Gastrocnemius medialis (tissue), 4 donors: ENCODE measurements at regions of chr3 and their contacts with region 1.

Region 1: DNA sequence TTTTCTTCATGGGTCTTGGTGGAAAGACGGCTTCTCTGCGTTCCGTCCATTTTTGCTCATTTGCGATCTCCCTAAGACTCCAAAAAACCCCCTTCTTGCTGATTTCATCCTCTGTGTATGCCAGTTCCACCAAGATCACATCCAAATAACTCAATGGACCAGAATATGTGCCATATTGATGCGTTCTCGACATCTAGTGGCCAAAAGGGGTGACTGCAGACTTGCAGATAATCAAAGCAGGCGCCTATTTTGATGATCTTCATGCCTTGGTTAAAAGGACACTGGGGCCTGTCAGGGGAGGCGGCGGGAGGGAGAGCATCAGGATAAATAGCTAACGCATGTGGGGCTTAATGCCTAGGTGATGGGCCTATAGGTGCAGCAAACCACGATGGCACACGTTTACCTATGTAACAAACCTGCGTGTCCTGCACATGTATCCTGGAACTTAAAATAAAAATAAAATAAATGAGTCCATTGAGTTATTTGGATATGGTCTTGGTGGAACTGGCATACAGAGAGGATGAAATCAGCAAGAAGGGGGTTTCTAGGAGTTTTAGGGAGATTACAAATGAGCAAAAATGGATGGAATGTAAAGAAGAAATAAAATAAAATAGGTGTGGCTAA is 104.2 kb upstream of the RAD18 start:
- DNase-seq: peak in 1 of 2 donors; percentile 36
- ATAC-seq: peak; percentile 66 to 74
- H3K4me3 ChIP-seq: no peak overlapping the region
- H3K27ac ChIP-seq: no peak overlapping the region
- H3K4me1 ChIP-seq: no peaks in the 10 kb centered on the region
- H3K27me3 ChIP-seq: no peaks in the 10 kb centered on the region
- CTCF ChIP-seq: peak; percentile 77 to 94 (median 84)
- POLR2A ChIP-seq: no peak

Region 2: DNA sequence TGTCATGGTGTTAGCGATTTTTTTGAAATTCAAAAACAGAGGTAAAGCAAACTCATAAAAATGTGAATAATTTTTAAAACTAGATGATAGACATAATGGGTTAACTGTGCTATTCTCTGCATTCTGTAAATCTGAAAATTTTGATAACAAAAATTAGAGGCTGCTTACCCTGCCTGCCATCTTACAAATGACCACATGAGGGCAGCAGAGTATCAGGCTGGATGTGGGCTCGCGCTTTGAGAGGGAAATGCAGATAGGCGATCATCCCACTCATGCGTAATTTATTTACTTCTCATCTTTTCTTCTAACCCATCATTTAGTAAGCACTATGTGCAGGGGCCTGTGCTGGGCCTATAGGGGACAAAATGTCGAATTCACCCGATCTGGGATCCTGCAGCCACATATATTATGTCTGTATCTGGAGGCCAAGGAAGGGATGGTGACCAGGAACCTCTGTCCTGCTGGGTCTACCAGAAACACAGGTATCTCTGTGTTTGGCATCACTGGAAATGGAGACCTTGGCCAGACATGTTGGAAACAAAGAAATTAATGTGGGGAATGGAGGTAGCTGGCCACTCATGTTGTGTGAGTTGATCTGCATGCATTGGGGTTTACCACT is 96.4 kb before region 1 on chr3:
- in situ Hi-C with region 1: loop called in 3 of 4 experiments (anchors 5 to 10 kb)
- intact Hi-C with region 1: loop called (anchors 1 kb)
- DNase-seq: peak in 1 of 2 donors; percentile 36
- ATAC-seq: peak; percentile 57 to 69
- H3K4me3 ChIP-seq: no peak overlapping the region
- H3K27ac ChIP-seq: no peak overlapping the region
- H3K4me1 ChIP-seq: no peaks in the 10 kb centered on the region
- H3K27me3 ChIP-seq: no peaks in the 10 kb centered on the region
- CTCF ChIP-seq: peak; percentile 88 to 99 (median 95)
- POLR2A ChIP-seq: no peak

Region 3: GRCh38 chr3:8987645-8988383 is 79.7 kb before region 1 on chr3:
- in situ Hi-C with region 1: loop called in 1 of 4 experiments (anchors 10 kb)
- intact Hi-C with region 1: loop called (anchors 1 kb)
- DNase-seq: peak in 1 of 2 donors; percentile 51
- ATAC-seq: peak; percentile 55 to 76
- H3K4me3 ChIP-seq: no peak overlapping the region
- H3K27ac ChIP-seq: no peak overlapping the region
- H3K4me1 ChIP-seq: no peaks in the 10 kb centered on the region
- H3K27me3 ChIP-seq: no peaks in the 10 kb centered on the region
- CTCF ChIP-seq: peak; percentile 60 to 83 (median 74)
- POLR2A ChIP-seq: no peak

Region 4: GRCh38 chr3:9088441-9089353 is 21.2 kb after region 1 on chr3:
- in situ Hi-C with region 1: no loop called
- intact Hi-C with region 1: no loop called
- DNase-seq: no peak
- ATAC-seq: peak in 1 of 2 donors; percentile 61
- H3K4me3 ChIP-seq: no peak overlapping the region
- H3K27ac ChIP-seq: no peak overlapping the region
- H3K4me1 ChIP-seq: peaks cover 0 to 13% of the 10 kb centered on the region in 2 donors
- H3K27me3 ChIP-seq: no peaks in the 10 kb centered on the region
- CTCF ChIP-seq: no peak
- POLR2A ChIP-seq: no peak

Region 5: DNA sequence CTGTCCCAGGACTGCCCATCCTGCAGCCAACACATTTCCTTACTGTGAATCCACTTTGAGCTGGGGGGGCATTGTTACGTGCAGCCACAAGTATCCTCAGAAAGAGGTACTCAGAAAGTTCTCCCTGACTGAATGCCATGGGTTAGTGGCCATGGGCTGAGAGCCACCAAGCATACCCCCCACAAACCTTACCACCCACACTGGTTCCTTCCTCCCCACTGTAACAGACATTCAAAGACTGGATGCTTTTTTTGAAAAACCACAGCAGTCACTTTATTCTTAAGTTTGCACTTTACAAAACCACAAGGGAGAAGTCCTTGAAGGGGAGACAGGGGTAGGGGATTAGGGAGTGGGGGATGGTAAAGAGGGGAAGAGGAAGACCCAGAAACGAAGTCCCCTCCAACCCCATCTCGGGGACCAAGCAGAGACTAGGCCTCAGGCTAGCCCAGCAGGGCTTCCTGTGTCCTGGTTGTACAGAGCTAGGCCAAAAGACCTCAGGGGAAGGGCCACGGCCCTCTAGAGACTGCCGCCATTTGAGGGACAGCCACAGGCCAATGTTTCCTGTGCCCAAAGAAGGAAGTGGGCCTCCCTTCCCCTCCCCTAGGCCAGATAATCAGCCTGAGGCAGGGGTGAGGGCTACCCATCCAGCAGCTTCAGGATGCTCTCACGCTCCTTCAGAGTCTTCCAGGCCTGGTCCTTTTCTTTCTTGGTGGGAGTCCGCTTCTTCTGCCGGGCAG is 712.4 kb after region 1 on chr3:
- in situ Hi-C with region 1: no loop called
- intact Hi-C with region 1: no loop called
- DNase-seq: no peak
- ATAC-seq: no peak
- H3K4me3 ChIP-seq: no peak overlapping the region
- H3K27ac ChIP-seq: no peak overlapping the region
- H3K4me1 ChIP-seq: no peaks in the 10 kb centered on the region
- H3K27me3 ChIP-seq: no peaks in the 10 kb centered on the region
- CTCF ChIP-seq: no peak
- POLR2A ChIP-seq: no peak

Region 6: GRCh38 chr3:10292505-10293419 is 1225.3 kb after region 1 on chr3 and contains the start of gene GHRL:
- in situ Hi-C with region 1: no loop called
- intact Hi-C with region 1: no loop called
- DNase-seq: peak in 1 of 2 donors; percentile 10
- ATAC-seq: no peak
- H3K4me3 ChIP-seq: no peak within 1 kb of the TSS
- H3K27ac ChIP-seq: peak within 1 kb of the TSS in 1 of 4 donors; percentile 2
- H3K4me1 ChIP-seq: no peaks in the 10 kb centered on the region
- H3K27me3 ChIP-seq: no peaks in the 10 kb centered on the region
- CTCF ChIP-seq: no peak
- POLR2A ChIP-seq: no peak
- total RNA-seq, gene GHRL: not detected